ENCODE measurements at regions of chrX and their contacts with region 1.

Region 1: DNA sequence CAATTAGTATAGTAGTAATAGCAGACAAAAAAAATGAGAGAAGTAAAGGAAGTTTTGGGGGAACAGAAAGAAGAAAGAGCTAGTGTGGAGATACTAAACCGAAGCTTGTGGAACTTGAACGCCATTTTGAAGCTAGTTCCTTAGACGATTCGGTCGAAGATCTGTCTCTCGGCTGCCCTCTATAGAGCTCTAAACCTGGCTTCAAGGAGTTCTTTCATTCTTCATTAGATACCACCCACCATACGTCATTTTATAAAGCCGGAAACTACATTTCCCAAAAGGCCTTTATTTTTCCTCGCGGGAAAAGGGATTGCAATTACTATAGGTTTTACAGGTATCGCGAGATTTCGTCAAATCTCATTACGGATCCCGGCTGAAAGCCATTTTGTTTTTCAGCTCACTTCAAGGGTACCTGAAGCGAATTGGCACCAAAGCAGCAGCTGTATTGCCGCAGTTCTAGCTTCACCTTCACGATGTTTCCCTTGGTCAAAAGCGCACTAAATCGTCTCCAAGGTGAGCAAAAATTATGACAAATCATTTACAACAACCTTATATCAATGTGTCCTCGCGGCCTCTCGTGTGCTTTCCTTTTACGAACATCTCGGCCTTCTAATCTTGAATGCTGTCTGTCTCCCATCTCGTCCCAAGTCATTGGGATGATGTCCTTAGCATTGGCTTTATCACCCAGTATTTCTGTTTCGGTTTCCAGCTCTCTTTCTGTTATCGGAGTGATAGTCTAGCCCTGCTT is at the start of gene COX7B:
- DNase-seq: peak; percentile 52 to 94 (median 67)
- ATAC-seq: peak; percentile 79
- H3K4me3 ChIP-seq: peak within 1 kb of the TSS; percentile 74
- H3K27ac ChIP-seq: peak within 1 kb of the TSS; percentile 99
- H3K4me1 ChIP-seq: peaks cover 2 to 3% of the 10 kb centered on the region in 2 experiments; a peak in 2 of 5 replicates
- H3K27me3 ChIP-seq: no peaks in the 10 kb centered on the region
- CTCF ChIP-seq: peak; percentile 26 to 80 (median 62); a peak in 4 of 6 replicates
- EP300 ChIP-seq: no peak
- POLR2A ChIP-seq: peak; percentile 91
- RAD21 ChIP-seq: peak in 1 of 2 experiments; percentile 25; a peak in 2 of 4 replicates
- polyA plus RNA-seq, gene COX7B: 2,613 to 2,891 TPM

Region 2: DNA sequence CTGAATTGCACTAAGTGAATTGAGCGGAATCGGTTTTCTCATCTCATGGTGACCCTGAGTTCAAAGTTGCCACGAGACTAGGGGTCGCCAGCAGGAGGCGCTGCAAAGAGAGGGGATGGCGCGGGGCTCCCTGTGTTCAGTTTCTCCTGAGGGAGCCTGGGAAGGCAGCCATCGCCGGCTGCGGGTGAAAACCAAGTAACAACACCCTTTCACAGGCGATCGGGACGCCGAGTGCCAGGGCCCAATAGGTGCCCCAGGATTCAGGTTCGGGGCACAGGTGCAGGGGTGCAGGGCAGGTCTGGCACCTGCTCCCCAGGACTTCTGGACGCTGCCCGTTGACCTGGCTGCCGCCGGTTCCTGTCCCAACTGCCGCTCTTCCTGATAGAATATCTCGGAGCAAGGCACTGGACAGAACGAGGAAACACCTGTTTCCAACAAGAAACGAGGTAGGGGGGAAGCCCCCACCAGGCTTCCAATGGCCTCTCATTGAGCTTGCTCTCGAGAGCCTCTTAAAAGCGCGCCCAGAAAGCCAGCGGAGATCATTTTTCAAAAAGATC is 453.1 kb before region 1 on chrX:
- CTCF ChIA-PET with region 1: no interaction called
- POLR2A ChIA-PET with region 1: no interaction called
- in situ Hi-C with region 1: no loop called
- intact Hi-C with region 1: loop called (anchors 10 kb)
- DNase-seq: no peak
- ATAC-seq: no peak
- H3K4me3 ChIP-seq: no peak overlapping the region
- H3K27ac ChIP-seq: no peak overlapping the region
- H3K4me1 ChIP-seq: peaks cover 0 to 5% of the 10 kb centered on the region in 2 experiments; a peak in 2 of 5 replicates
- H3K27me3 ChIP-seq: peaks cover 0 to 4% of the 10 kb centered on the region in 2 experiments; a peak in 1 of 5 replicates
- CTCF ChIP-seq: peak in 1 of 3 experiments; percentile 47; a peak in 1 of 6 replicates
- EP300 ChIP-seq: no peak
- POLR2A ChIP-seq: no peak
- RAD21 ChIP-seq: no peak

Region 3: DNA sequence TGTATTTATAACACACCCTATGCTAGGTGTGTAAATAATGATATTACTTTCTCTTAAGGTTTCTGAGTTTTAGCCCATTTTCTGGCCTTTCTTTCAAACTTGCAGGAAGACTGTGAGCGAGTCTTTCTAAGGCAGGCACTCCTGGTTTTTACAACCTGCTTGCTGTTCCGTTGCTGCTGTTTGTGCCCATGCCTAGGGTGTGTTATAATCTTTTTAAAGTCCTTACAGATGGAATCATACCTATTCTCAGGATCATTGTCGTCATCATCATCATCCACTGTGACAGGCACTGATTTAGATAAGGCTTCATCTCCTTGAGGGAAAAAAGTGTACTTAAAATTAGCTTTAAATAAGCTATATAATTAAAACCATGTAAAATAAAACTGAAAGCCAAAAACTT is 223.3 kb before region 1 on chrX:
- CTCF ChIA-PET with region 1: no interaction called
- POLR2A ChIA-PET with region 1: no interaction called
- in situ Hi-C with region 1: no loop called
- intact Hi-C with region 1: loop called (anchors 5 kb)
- DNase-seq: no peak
- ATAC-seq: no peak
- H3K4me3 ChIP-seq: no peak overlapping the region
- H3K27ac ChIP-seq: no peak overlapping the region
- H3K4me1 ChIP-seq: no peaks in the 10 kb centered on the region; a peak in 1 of 5 replicates
- H3K27me3 ChIP-seq: no peaks in the 10 kb centered on the region
- CTCF ChIP-seq: no peak
- EP300 ChIP-seq: no peak
- POLR2A ChIP-seq: no peak
- RAD21 ChIP-seq: no peak

Region 4: DNA sequence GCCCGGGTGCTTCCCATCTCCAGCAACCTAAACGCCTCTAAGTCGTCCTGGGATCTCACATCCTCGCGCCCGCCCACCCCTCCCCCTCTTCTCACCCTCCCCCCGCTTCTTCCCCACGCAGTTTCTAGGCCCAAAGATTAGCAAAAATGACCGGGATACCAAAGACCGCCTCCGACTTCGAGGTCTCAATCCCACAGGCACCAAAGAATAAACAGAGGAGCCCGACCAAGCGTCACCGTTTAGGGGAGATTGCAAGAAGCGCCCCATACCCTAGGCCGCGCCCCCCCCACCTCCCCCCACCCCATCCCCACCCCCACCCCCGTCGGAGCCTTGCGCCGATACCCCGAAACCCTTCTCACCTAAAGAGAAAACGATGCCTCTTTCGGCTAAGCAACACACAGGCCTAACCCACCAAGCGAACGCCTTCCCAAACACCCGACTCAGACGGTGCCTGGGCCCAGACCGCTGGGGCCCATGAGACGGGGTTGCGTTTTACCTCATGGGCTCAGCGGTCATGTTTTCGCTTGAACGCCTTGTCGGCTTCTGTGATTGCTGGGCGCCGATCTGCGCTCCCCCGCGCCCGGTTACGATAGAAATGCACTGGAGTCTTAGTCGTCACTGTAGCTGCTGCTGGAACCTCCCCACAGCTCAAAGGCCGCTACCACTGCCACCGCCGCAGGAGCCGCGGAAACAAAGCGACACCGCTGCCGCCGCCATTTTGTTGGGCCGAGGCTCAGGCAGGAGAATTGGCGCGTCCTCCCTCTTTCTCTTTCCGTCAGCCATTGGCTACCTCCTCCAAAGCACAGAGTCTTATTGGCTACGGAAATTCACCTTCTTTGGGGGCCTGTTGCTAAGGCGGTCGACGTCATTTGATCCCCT is 113.5 kb before region 1 on chrX and contains the start of gene ATRX:
- CTCF ChIA-PET with region 1: no interaction called
- POLR2A ChIA-PET with region 1: no interaction called
- in situ Hi-C with region 1: no loop called
- intact Hi-C with region 1: loop called (anchors 5 kb)
- DNase-seq: peak; percentile 28 to 77 (median 56)
- ATAC-seq: peak; percentile 94
- H3K4me3 ChIP-seq: peak within 1 kb of the TSS; percentile 55
- H3K27ac ChIP-seq: peak within 1 kb of the TSS; percentile 82
- H3K4me1 ChIP-seq: peaks cover 0 to 4% of the 10 kb centered on the region in 2 experiments; a peak in 2 of 5 replicates
- H3K27me3 ChIP-seq: no peaks in the 10 kb centered on the region
- CTCF ChIP-seq: no peak
- EP300 ChIP-seq: no peak
- POLR2A ChIP-seq: peak; percentile 84
- RAD21 ChIP-seq: no peak
- polyA plus RNA-seq, gene ATRX: 7.7 to 11.8 TPM

Region 5: DNA sequence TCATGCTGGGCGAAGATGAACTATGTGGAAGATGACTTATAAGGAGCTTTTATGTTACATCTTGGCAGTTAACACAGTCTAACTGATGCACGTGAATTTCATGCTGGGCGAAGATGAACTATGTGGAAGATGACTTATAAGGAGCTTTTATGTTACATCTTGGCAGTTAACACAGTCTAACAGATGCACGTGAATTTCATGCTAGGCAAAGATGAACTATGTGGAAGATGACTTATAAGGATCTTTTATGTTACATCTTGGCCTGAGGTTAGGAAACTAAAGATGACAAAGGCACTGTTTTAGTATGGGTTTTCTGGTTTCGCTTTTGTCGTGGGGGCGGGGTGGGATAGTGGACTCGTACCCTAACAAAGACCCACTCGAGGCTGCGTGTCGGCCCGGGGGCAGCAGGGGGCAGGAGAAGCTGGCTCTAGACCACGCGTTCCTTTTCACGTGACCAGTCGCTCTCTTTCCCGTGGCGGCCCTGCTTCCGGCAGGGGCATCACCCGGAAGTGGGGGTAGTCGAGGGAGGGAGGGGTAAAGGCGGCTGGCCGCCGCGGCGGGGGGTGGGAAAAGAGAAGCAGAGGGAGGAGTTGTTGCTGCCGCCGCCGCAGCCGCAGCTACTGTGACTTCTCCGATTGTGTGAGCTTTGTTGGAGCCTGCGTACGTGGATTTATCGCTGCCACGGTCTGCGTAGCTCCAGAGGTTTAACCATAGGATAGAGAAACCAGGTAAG is 11.0 kb after region 1 on chrX and contains the start of gene ATP7A:
- CTCF ChIA-PET with region 1: interaction called, 3 read pairs
- POLR2A ChIA-PET with region 1: interaction called, 18 read pairs
- in situ Hi-C with region 1: no loop called
- intact Hi-C with region 1: no loop called
- DNase-seq: peak; percentile 88 to 93 (median 90)
- ATAC-seq: peak; percentile 89
- H3K4me3 ChIP-seq: peak within 1 kb of the TSS; percentile 60
- H3K27ac ChIP-seq: peak within 1 kb of the TSS; percentile 78
- H3K4me1 ChIP-seq: peaks cover 0 to 5% of the 10 kb centered on the region in 2 experiments; a peak in 2 of 5 replicates
- H3K27me3 ChIP-seq: no peaks in the 10 kb centered on the region
- CTCF ChIP-seq: peak; percentile 64 to 69 (median 65)
- EP300 ChIP-seq: no peak
- POLR2A ChIP-seq: 0 out of 2 replicates have a peak, but pooled peaks have one; percentile 48
- RAD21 ChIP-seq: peak; percentile 65 to 69
- polyA plus RNA-seq, gene ATP7A: 7.8 to 9.2 TPM

Region 6: GRCh38 chrX:78029663-78030062 is 130.4 kb after region 1 on chrX:
- CTCF ChIA-PET with region 1: no interaction called
- POLR2A ChIA-PET with region 1: no interaction called
- in situ Hi-C with region 1: loop called (anchors 10 kb)
- intact Hi-C with region 1: no loop called
- DNase-seq: peak in 3 of 4 experiments; percentile 5 to 42 (median 6)
- ATAC-seq: peak; percentile 61
- H3K4me3 ChIP-seq: no peak overlapping the region
- H3K27ac ChIP-seq: no peak overlapping the region
- H3K4me1 ChIP-seq: no peaks in the 10 kb centered on the region
- H3K27me3 ChIP-seq: no peaks in the 10 kb centered on the region
- CTCF ChIP-seq: peak; percentile 45 to 66 (median 51); a peak in 5 of 6 replicates
- EP300 ChIP-seq: no peak
- POLR2A ChIP-seq: no peak
- RAD21 ChIP-seq: peak; percentile 52 to 78

Region 7: GRCh38 chrX:78103623-78104446 is 204.6 kb after region 1 on chrX and contains the start of gene PGK1:
- CTCF ChIA-PET with region 1: no interaction called
- POLR2A ChIA-PET with region 1: interaction called, 3 read pairs
- in situ Hi-C with region 1: no loop called
- intact Hi-C with region 1: loop called (anchors 5 kb)
- DNase-seq: peak; percentile 92 to 95 (median 94)
- ATAC-seq: peak; percentile 99
- H3K4me3 ChIP-seq: peak within 1 kb of the TSS; percentile 87
- H3K27ac ChIP-seq: peak within 1 kb of the TSS; percentile 91
- H3K4me1 ChIP-seq: peaks cover 5 to 6% of the 10 kb centered on the region in 2 experiments; a peak in 3 of 5 replicates
- H3K27me3 ChIP-seq: no peaks in the 10 kb centered on the region
- CTCF ChIP-seq: no peak
- EP300 ChIP-seq: peak; percentile 16; the same call in 1 of the 2 replicates
- POLR2A ChIP-seq: peak; percentile 91
- RAD21 ChIP-seq: no peak
- polyA plus RNA-seq, gene PGK1: 541 to 543 TPM

Measured in K562 (cell line).